Stomach (tissue), 19 donors: ENCODE measurements at regions of chr1 and their contacts with region 1.

Region 1: GRCh38 chr1:35577071-35577998 is 4.2 kb downstream of the TFAP2E start:
- DNase-seq: peak; percentile 53 to 75
- H3K4me3 ChIP-seq: peak overlapping the region; percentile 40 to 56 (median 50)
- H3K27ac ChIP-seq: peak overlapping the region in 1 of 5 donors; percentile 11
- H3K4me1 ChIP-seq: peaks cover 28 to 55% (median 44%) of the 10 kb centered on the region in 4 donors
- H3K27me3 ChIP-seq: peaks cover 0 to 63% (median 31%) of the 10 kb centered on the region in 3 donors
- CTCF ChIP-seq: no peak
- EP300 ChIP-seq: no peak
- POLR2A ChIP-seq: no peak

Region 2: GRCh38 chr1:35726450-35727433 is 149.4 kb after region 1 on chr1:
- intact Hi-C with region 1: loop called (anchors 5 kb)
- DNase-seq: peak; percentile 49 to 88
- H3K4me3 ChIP-seq: no peak overlapping the region
- H3K27ac ChIP-seq: no peak overlapping the region
- H3K4me1 ChIP-seq: peaks cover 0 to 10% (median 5%) of the 10 kb centered on the region in 4 donors
- H3K27me3 ChIP-seq: peaks cover 0 to 3% (median 0%) of the 10 kb centered on the region in 3 donors
- CTCF ChIP-seq: peak in 5 of 7 experiments; percentile 44 to 79 (median 76)
- EP300 ChIP-seq: no peak
- POLR2A ChIP-seq: no peak

Region 3: GRCh38 chr1:35769759-35770446 is 192.6 kb after region 1 on chr1 and contains the start of gene CLSPN:
- intact Hi-C with region 1: loop called (anchors 10 kb)
- DNase-seq: peak; percentile 95 to 98
- H3K4me3 ChIP-seq: peak within 1 kb of the TSS; percentile 70 to 99 (median 92)
- H3K27ac ChIP-seq: peak within 1 kb of the TSS; percentile 82 to 93 (median 86)
- H3K4me1 ChIP-seq: peaks cover 0 to 24% (median 8%) of the 10 kb centered on the region in 4 donors
- H3K27me3 ChIP-seq: no peaks in the 10 kb centered on the region
- CTCF ChIP-seq: no peak
- EP300 ChIP-seq: no peak
- POLR2A ChIP-seq: no peak
- total RNA-seq, gene CLSPN: under 0.01 to 10.7 (median 7.8) TPM